ENCODE measurements at regions of chr9 and their contacts with region 1.

Region 1: DNA sequence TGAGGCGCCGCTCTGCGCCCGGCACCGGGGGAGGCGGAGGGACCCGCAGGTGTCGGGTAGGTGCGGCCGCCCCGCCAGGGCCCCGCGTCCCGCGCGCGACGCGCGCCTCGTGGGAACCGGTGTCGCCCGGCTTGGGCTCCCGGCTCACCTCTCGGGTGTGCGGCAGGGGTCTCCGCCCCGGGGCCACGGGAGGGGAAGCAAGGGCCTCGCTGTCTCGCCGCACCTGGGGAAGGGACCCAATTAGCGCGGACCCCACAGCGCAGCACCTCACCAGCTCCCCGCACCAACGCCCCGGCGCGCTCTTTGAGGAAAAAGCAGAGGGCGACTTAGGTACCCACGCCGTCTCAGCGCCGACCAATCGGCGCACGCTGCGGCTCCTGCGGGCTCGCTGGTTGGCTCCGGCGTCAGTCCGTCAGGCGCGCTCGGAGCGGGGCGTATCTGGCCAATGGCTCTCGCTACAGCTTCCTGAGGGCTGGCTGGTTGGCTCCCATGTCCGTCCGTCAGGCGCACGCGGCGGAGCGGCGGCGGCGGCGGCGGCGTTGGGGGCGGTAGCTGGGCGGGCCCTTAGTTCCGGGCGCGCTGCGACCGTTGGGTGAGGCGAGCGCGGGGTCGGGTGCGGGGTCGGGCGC is at the start of gene TRAF2:
- DNase-seq: peak; percentile 98
- ATAC-seq: peak; percentile 92
- H3K4me3 ChIP-seq: peak within 1 kb of the TSS; percentile 100
- H3K27ac ChIP-seq: peak within 1 kb of the TSS; percentile 98
- H3K4me1 ChIP-seq: peaks cover 33% of the 10 kb centered on the region
- H3K27me3 ChIP-seq: no peaks in the 10 kb centered on the region
- CTCF ChIP-seq: 0 out of 6 replicates have a peak, but pooled peaks of 1 of the 3 experiments have one; percentile 3
- EP300 ChIP-seq: no peak
- POLR2A ChIP-seq: peak; percentile 90
- RAD21 ChIP-seq: no peak
- polyA plus RNA-seq, gene TRAF2: 0.34 to 1.1 TPM

Region 2: GRCh38 chr9:136807281-136808074 is 78.6 kb before region 1 on chr9 and contains the start of gene RABL6:
- CTCF ChIA-PET with region 1: no interaction called
- POLR2A ChIA-PET with region 1: interaction called, 4 read pairs
- RAD21 ChIA-PET with region 1: no interaction called
- SMC1A ChIA-PET with region 1: interaction called, 3 read pairs
- in situ Hi-C with region 1: no loop called
- intact Hi-C with region 1: loop called (anchors 10 kb)
- DNase-seq: no peak
- ATAC-seq: peak; percentile 87
- H3K4me3 ChIP-seq: peak within 1 kb of the TSS; percentile 90
- H3K27ac ChIP-seq: peak within 1 kb of the TSS; percentile 80
- H3K4me1 ChIP-seq: peaks cover 7% of the 10 kb centered on the region
- H3K27me3 ChIP-seq: no peaks in the 10 kb centered on the region
- CTCF ChIP-seq: no peak
- EP300 ChIP-seq: no peak
- POLR2A ChIP-seq: peak; percentile 78
- RAD21 ChIP-seq: no peak
- polyA plus RNA-seq, gene RABL6: 1.4 to 5.4 TPM

Region 3: GRCh38 chr9:136902259-136902821 is 16.3 kb after region 1 on chr9:
- CTCF ChIA-PET with region 1: interaction called, 16 read pairs
- POLR2A ChIA-PET with region 1: interaction called, 41 read pairs
- RAD21 ChIA-PET with region 1: interaction called, 30 read pairs
- SMC1A ChIA-PET with region 1: interaction called, 70 read pairs
- in situ Hi-C with region 1: no loop called
- intact Hi-C with region 1: loop called (anchors 2 kb)
- DNase-seq: peak; percentile 66
- ATAC-seq: peak; percentile 90
- H3K4me3 ChIP-seq: peak overlapping the region; percentile 24; the same call in 1 of the 2 replicates
- H3K27ac ChIP-seq: peak overlapping the region; percentile 99
- H3K4me1 ChIP-seq: peaks cover 59% of the 10 kb centered on the region
- H3K27me3 ChIP-seq: no peaks in the 10 kb centered on the region
- CTCF ChIP-seq: no peak
- EP300 ChIP-seq: peak; percentile 73 to 76; a peak in 3 of 4 replicates
- POLR2A ChIP-seq: peak; percentile 52
- RAD21 ChIP-seq: no peak

Region 4: GRCh38 chr9:137012694-137013584 is 126.9 kb after region 1 on chr9:
- CTCF ChIA-PET with region 1: no interaction called
- POLR2A ChIA-PET with region 1: no interaction called
- RAD21 ChIA-PET with region 1: no interaction called
- SMC1A ChIA-PET with region 1: no interaction called
- in situ Hi-C with region 1: no loop called
- intact Hi-C with region 1: no loop called
- DNase-seq: no peak
- ATAC-seq: no peak
- H3K4me3 ChIP-seq: no peak overlapping the region
- H3K27ac ChIP-seq: no peak overlapping the region
- H3K4me1 ChIP-seq: no peaks in the 10 kb centered on the region
- H3K27me3 ChIP-seq: no peaks in the 10 kb centered on the region
- CTCF ChIP-seq: no peak
- EP300 ChIP-seq: no peak
- POLR2A ChIP-seq: no peak
- RAD21 ChIP-seq: no peak